IMR-90 (cell line): ENCODE measurements at regions of chr4 and their contacts with region 1.

Region 1: GRCh38 chr4:77959566-77960338 is 97.1 kb downstream of the MRPL1 start:
- DNase-seq: peak; percentile 57
- ATAC-seq: peak; percentile 61; the same call in 1 of the 2 replicates
- H3K4me3 ChIP-seq: no peak overlapping the region
- H3K27ac ChIP-seq: no peak overlapping the region
- H3K4me1 ChIP-seq: no peaks in the 10 kb centered on the region
- H3K27me3 ChIP-seq: no peaks in the 10 kb centered on the region
- CTCF ChIP-seq: peak; percentile 70
- POLR2A ChIP-seq: no peak
- RAD21 ChIP-seq: peak; percentile 70

Region 2: DNA sequence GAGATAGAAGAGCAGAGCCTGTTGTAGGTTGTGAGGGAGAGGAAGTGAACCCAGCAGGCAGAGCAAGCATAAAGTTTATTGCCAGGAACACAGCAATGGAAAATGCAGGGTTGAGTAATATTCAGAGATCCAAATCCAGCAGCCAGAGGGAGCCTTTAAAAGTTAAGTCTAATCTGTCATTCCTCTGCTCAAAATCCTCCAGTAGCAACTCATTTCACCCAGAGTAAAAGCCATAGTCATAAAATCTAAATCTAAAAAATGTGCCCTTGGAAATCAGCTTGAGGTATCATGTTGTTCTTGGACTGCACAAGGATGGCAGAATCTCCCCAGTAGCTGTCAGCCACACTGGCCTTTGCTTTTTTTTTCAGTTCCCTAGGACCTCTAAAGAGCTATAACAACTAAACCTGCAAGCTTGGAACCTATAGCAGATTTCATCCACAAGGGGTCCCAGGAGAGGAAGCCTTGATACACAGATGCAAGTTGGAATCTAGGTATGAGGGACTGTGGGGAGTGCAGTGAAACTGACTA is 34.5 kb after region 1 on chr4:
- CTCF ChIA-PET with region 1: no interaction called
- POLR2A ChIA-PET with region 1: no interaction called
- dilution Hi-C with region 1: no loop called
- in situ Hi-C with region 1: no loop called
- intact Hi-C with region 1: no loop called
- DNase-seq: peak; percentile 56
- ATAC-seq: peak; percentile 84
- H3K4me3 ChIP-seq: no peak overlapping the region
- H3K27ac ChIP-seq: no peak overlapping the region
- H3K4me1 ChIP-seq: no peaks in the 10 kb centered on the region
- H3K27me3 ChIP-seq: peaks cover 5% of the 10 kb centered on the region
- CTCF ChIP-seq: peak; percentile 60
- POLR2A ChIP-seq: no peak
- RAD21 ChIP-seq: peak; percentile 50

Region 3: DNA sequence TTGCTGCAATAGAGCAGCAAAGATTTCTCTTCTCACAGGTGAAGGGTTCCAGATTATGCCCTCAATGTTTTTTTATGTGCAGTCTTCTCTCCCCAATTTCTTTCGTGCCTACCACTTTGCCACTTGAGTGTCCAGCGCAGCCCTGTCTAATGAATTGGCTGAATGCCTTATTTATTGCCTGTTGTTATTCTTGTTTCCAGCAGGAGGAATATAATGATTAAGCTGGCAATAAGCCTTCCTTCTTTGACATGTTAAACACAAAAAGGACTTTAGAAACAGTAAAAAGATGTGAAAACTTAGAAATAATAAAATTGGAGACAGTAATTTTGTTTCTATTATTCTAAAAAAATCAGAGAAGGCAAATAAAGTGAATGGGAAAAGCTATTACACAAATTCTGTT is 62.8 kb after region 1 on chr4:
- CTCF ChIA-PET with region 1: no interaction called
- POLR2A ChIA-PET with region 1: no interaction called
- dilution Hi-C with region 1: no loop called
- in situ Hi-C with region 1: no loop called
- intact Hi-C with region 1: no loop called
- DNase-seq: no peak
- ATAC-seq: no peak
- H3K4me3 ChIP-seq: no peak overlapping the region
- H3K27ac ChIP-seq: no peak overlapping the region
- H3K4me1 ChIP-seq: no peaks in the 10 kb centered on the region
- H3K27me3 ChIP-seq: no peaks in the 10 kb centered on the region
- CTCF ChIP-seq: no peak
- POLR2A ChIP-seq: no peak
- RAD21 ChIP-seq: no peak

Region 4: DNA sequence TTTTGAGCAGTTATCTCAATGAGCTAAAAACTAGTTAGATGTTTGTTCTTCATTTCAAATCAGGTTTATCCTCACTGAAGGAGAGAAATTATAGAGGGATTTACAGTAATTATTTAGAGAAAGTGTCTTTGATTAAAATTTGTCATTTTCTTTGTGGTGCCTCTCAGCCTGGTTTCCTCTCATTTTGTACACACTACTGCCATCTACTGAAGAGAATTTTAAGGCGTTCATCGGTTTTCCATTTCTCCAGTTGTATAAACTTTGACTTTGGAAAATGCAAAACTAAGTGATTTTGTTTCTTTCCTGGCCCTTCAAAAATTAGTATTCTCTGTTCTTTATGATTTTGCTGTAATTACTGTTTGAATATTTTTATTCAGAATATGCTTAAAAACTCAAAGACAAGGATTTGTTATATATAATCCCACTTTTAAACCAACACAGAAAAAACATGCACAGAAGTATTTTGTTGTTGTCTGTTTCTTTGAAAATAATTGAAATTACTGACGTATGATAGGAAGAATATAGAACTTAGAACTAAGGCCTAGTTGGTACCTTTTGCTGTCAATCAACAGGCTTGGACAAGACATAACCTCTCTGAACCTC is 557.4 kb after region 1 on chr4:
- CTCF ChIA-PET with region 1: interaction called, 3 read pairs
- POLR2A ChIA-PET with region 1: no interaction called
- dilution Hi-C with region 1: no loop called
- in situ Hi-C with region 1: loop called (anchors 10 kb)
- intact Hi-C with region 1: loop called (anchors 2 kb)
- DNase-seq: peak; percentile 43
- ATAC-seq: peak; percentile 71
- H3K4me3 ChIP-seq: no peak overlapping the region
- H3K27ac ChIP-seq: no peak overlapping the region
- H3K4me1 ChIP-seq: no peaks in the 10 kb centered on the region
- H3K27me3 ChIP-seq: peaks cover 2% of the 10 kb centered on the region; the same call in 1 of the 2 replicates
- CTCF ChIP-seq: peak; percentile 75
- POLR2A ChIP-seq: no peak
- RAD21 ChIP-seq: peak; percentile 77

Region 5: GRCh38 chr4:78612398-78613178 is 652.8 kb after region 1 on chr4:
- CTCF ChIA-PET with region 1: no interaction called
- POLR2A ChIA-PET with region 1: no interaction called
- dilution Hi-C with region 1: no loop called
- in situ Hi-C with region 1: no loop called
- intact Hi-C with region 1: loop called (anchors 5 kb)
- DNase-seq: peak; percentile 61
- ATAC-seq: peak; percentile 73
- H3K4me3 ChIP-seq: no peak overlapping the region
- H3K27ac ChIP-seq: no peak overlapping the region
- H3K4me1 ChIP-seq: no peaks in the 10 kb centered on the region; the same call in 1 of the 2 replicates
- H3K27me3 ChIP-seq: no peaks in the 10 kb centered on the region
- CTCF ChIP-seq: peak; percentile 65
- POLR2A ChIP-seq: no peak
- RAD21 ChIP-seq: peak; percentile 76

Region 6: GRCh38 chr4:78938868-78939666 is 979.3 kb after region 1 on chr4 and contains the start of gene PAQR3:
- CTCF ChIA-PET with region 1: no interaction called
- POLR2A ChIA-PET with region 1: no interaction called
- dilution Hi-C with region 1: no loop called
- in situ Hi-C with region 1: no loop called
- intact Hi-C with region 1: loop called (anchors 10 kb)
- DNase-seq: peak; percentile 76
- ATAC-seq: peak; percentile 99
- H3K4me3 ChIP-seq: peak within 1 kb of the TSS; percentile 100
- H3K27ac ChIP-seq: peak within 1 kb of the TSS; percentile 64
- H3K4me1 ChIP-seq: peaks cover 2% of the 10 kb centered on the region; the same call in 1 of the 2 replicates
- H3K27me3 ChIP-seq: peaks cover 8% of the 10 kb centered on the region
- CTCF ChIP-seq: no peak
- POLR2A ChIP-seq: peak; percentile 76
- RAD21 ChIP-seq: no peak; the same call in 1 of the 2 replicates
- total RNA-seq, gene PAQR3: 11.5 and 20.0 TPM in 2 replicates